Ovary (tissue), 10 donors: ENCODE measurements at regions of chr1 and their contacts with region 1.

Region 1: DNA sequence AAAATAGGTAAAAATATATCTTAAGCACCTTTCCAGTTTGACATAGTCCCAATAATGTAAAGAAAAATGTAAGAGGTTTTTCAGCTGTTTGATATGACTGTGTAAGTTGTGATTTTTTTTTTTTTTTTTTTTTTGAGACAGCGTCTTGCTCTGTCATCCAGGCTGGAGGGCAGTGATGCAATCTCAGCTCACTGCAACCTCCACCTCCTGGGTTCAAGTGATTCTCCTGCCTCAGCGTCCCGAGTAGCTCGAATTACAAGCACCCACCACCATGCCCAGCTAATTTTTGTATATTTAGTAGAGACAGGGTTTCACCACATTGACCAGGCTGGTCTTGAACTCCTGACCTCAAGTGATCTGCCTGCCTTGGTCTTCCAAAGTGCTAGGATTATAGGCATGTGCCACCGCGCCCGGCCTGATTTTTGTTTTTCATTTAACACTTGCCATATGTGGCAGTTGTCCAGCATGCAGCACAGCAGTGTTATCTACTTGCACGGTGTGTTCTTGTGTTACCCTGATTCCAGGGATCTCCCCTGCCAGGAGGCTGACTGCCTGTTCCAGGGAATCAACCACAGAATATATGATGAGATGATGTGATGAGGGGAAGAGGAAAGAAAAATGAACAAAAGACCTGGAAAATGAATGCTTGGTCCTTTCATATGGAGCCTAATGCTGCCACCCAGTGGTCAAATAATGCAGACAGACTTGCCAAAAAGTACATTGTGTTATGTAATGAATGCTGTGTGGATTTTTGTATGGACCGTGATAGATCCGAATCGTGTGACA is 79.0 kb downstream of the RAVER2 start:
- DNase-seq: peak in 4 of 5 donors; percentile 54 to 81 (median 67)
- H3K4me3 ChIP-seq: no peak overlapping the region
- H3K27ac ChIP-seq: no peak overlapping the region
- H3K4me1 ChIP-seq: no peaks in the 10 kb centered on the region
- H3K27me3 ChIP-seq: no peaks in the 10 kb centered on the region
- CTCF ChIP-seq: peak; percentile 55 to 83 (median 81)
- EP300 ChIP-seq: no peak
- POLR2A ChIP-seq: no peak

Region 2: DNA sequence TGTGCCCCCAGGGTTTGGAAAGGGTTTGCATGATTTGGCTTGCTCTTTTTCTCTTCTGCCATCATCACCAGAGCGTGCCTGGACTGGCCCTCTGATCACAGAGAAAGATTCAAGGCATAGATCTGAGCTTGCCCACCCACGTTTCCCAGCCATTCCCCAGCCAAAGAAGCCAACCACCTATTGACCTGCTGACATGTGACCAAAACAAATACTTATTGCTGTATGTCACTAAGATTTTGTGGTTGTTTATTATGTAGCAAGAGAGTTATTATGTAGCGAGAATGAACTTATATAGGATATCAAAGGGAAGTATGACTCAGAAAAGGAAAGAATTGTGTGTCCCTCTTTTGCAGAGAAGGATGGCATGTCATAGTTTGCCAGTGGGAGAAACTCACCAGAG is 560.5 kb before region 1 on chr1:
- intact Hi-C with region 1: loop called (anchors 5 to 10 kb)
- DNase-seq: no peak
- H3K4me3 ChIP-seq: no peak overlapping the region
- H3K27ac ChIP-seq: no peak overlapping the region
- H3K4me1 ChIP-seq: no peaks in the 10 kb centered on the region
- H3K27me3 ChIP-seq: no peaks in the 10 kb centered on the region
- CTCF ChIP-seq: no peak
- EP300 ChIP-seq: no peak
- POLR2A ChIP-seq: no peak

Region 3: GRCh38 chr1:64686828-64687724 is 136.8 kb before region 1 on chr1:
- intact Hi-C with region 1: loop called in 3 of 4 experiments (anchors 5 to 10 kb)
- DNase-seq: peak in 1 of 5 donors; percentile 41
- H3K4me3 ChIP-seq: no peak overlapping the region
- H3K27ac ChIP-seq: peak overlapping the region in 1 of 2 donors; percentile 27
- H3K4me1 ChIP-seq: peaks cover 1% of the 10 kb centered on the region
- H3K27me3 ChIP-seq: no peaks in the 10 kb centered on the region
- CTCF ChIP-seq: peak; percentile 52 to 70 (median 68)
- EP300 ChIP-seq: no peak
- POLR2A ChIP-seq: no peak